CD4-positive, alpha-beta memory T cell (primary cell): ENCODE measurements at regions of chr20 and their contacts with region 1.

Region 1: GRCh38 chr20:23937303-23938117 is 51.1 kb downstream of the GGTLC1 start:
- DNase-seq: peak; percentile 53 to 68 (median 67)
- H3K4me3 ChIP-seq: no peak overlapping the region
- H3K4me3 Mint-ChIP-seq: no peak overlapping the region
- H3K27ac ChIP-seq: no peak overlapping the region
- H3K27ac Mint-ChIP-seq: no peak overlapping the region
- H3K4me1 ChIP-seq: no peaks in the 10 kb centered on the region
- H3K4me1 Mint-ChIP-seq: no peaks in the 10 kb centered on the region
- H3K27me3 ChIP-seq: no peaks in the 10 kb centered on the region
- H3K27me3 Mint-ChIP-seq: peaks cover 3 to 4% of the 10 kb centered on the region in 2 donors

Region 2: DNA sequence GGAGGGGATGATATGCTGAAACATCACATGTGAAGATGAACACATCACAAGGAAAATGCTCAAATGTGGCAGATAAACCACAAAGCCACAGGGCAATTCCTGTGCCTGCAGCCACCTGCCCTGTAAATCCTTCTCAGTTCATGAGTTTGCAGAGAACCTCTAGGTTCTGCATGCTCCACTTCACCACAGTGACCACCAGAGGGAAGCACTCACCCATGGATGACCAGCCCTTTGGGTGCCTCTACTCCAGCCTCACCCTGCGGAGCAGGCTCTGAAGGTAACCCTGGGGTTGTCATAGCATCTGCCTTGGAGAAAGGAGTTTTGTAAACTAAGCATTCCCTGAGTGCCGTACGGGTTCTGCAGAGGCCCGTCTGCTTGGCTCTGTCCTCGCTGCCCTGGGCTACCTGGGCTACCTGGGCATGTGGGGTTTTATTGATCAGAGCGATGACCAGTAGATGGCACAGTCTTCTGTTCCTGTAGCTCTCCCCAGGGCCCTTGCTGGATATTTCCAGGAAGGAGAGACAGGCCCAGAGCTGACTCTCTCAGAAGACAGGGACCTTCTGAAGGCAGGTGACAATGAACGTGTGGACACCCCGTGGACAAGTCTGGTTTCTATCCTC is 155.0 kb before region 1 on chr20:
- CTCF ChIA-PET with region 1: no interaction called
- POLR2A ChIA-PET with region 1: no interaction called
- intact Hi-C with region 1: no loop called
- DNase-seq: no peak
- H3K4me3 ChIP-seq: no peak overlapping the region
- H3K4me3 Mint-ChIP-seq: no peak overlapping the region
- H3K27ac ChIP-seq: no peak overlapping the region
- H3K27ac Mint-ChIP-seq: no peak overlapping the region
- H3K4me1 ChIP-seq: no peaks in the 10 kb centered on the region
- H3K4me1 Mint-ChIP-seq: no peaks in the 10 kb centered on the region
- H3K27me3 ChIP-seq: no peaks in the 10 kb centered on the region
- H3K27me3 Mint-ChIP-seq: peaks cover 0 to 3% of the 10 kb centered on the region in 2 donors

Region 3: DNA sequence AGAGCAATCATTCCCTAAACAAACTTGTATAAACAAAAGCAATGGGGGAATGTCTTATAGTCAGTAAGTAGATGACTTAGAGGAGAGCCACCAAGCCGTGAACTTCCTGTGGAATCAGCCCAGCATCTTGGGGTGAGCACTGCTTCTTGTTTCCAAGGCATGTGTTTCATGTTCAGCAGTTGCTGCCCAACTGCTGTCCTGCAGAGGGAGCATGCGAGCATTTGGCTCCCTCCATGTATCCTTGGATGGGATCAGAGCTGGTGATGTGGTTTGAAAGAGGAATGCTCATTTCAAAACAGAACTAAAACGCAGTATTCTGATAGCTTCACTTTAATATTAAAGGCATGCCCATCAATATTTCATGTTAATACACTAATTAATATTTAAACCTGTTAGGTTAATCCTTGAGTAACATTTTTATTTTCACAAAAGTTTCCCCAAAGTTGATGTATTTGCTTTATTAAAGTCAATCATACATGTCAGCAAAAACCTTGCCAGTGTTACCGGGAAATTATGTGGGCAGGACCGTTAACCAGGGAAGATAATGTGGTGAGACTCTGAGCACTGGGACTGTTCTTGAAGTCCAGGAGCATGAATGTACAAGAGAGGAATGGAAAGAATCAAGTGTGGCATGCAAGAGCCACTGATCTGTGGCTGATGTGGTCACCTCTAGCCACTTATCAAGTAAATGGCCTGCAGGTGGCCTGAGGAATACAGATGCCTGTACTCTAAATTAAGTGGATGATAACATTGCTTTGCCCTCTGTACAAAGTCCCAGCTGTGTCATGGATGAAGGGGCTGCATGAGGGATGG is 223.3 kb after region 1 on chr20:
- CTCF ChIA-PET with region 1: interaction called, 44 read pairs
- POLR2A ChIA-PET with region 1: no interaction called
- intact Hi-C with region 1: no loop called
- DNase-seq: no peak
- H3K4me3 ChIP-seq: no peak overlapping the region
- H3K4me3 Mint-ChIP-seq: no peak overlapping the region
- H3K27ac ChIP-seq: no peak overlapping the region
- H3K27ac Mint-ChIP-seq: no peak overlapping the region
- H3K4me1 ChIP-seq: no peaks in the 10 kb centered on the region
- H3K4me1 Mint-ChIP-seq: peaks cover 0 to 2% (median 0%) of the 10 kb centered on the region in 4 donors
- H3K27me3 ChIP-seq: no peaks in the 10 kb centered on the region
- H3K27me3 Mint-ChIP-seq: no peaks in the 10 kb centered on the region

Region 4: GRCh38 chr20:24917797-24918578 is 980.5 kb after region 1 on chr20:
- CTCF ChIA-PET with region 1: interaction called, 23 read pairs
- POLR2A ChIA-PET with region 1: no interaction called
- intact Hi-C with region 1: no loop called
- DNase-seq: peak in 4 of 5 donors; percentile 29 to 41 (median 32)
- H3K4me3 ChIP-seq: no peak overlapping the region
- H3K4me3 Mint-ChIP-seq: peak overlapping the region in 4 of 8 donors; percentile 21 to 56 (median 46)
- H3K27ac ChIP-seq: no peak overlapping the region
- H3K27ac Mint-ChIP-seq: peak overlapping the region in 1 of 7 donors; percentile 73
- H3K4me1 ChIP-seq: peaks cover 7% of the 10 kb centered on the region
- H3K4me1 Mint-ChIP-seq: peaks cover 2 to 11% (median 6%) of the 10 kb centered on the region in 4 donors
- H3K27me3 ChIP-seq: no peaks in the 10 kb centered on the region
- H3K27me3 Mint-ChIP-seq: peaks cover 1 to 8% of the 10 kb centered on the region in 2 donors